ENCODE measurements at regions of chr19 and their contacts with region 1.

Region 1: GRCh38 chr19:1383311-1384084 is at the start of gene NDUFS7:
- DNase-seq: peak; percentile 85 to 95 (median 91)
- H3K4me3 ChIP-seq: peak within 1 kb of the TSS; percentile 79
- H3K4me3 Mint-ChIP-seq: peak within 1 kb of the TSS; percentile 92 to 99 (median 95)
- H3K27ac ChIP-seq: peak within 1 kb of the TSS; percentile 77
- H3K27ac Mint-ChIP-seq: peak within 1 kb of the TSS; percentile 72 to 100 (median 96)
- H3K4me1 ChIP-seq: peaks cover 7% of the 10 kb centered on the region
- H3K4me1 Mint-ChIP-seq: peaks cover 15 to 30% (median 15%) of the 10 kb centered on the region in 3 donors
- H3K27me3 ChIP-seq: no peaks in the 10 kb centered on the region
- H3K27me3 Mint-ChIP-seq: peaks cover 4 to 10% of the 10 kb centered on the region in 2 donors
- total RNA-seq, gene NDUFS7: 102 to 104 TPM

Region 2: GRCh38 chr19:1355568-1356507 is 27.7 kb before region 1 on chr19:
- CTCF ChIA-PET with region 1: no interaction called
- POLR2A ChIA-PET with region 1: interaction called, 10 read pairs
- DNase-seq: no peak
- H3K4me3 ChIP-seq: peak overlapping the region; percentile 50
- H3K4me3 Mint-ChIP-seq: peak overlapping the region; percentile 81 to 92 (median 87)
- H3K27ac ChIP-seq: no peak overlapping the region
- H3K27ac Mint-ChIP-seq: peak overlapping the region in 7 of 8 donors; percentile 44 to 97 (median 68)
- H3K4me1 ChIP-seq: peaks cover 10% of the 10 kb centered on the region
- H3K4me1 Mint-ChIP-seq: peaks cover 12 to 22% (median 15%) of the 10 kb centered on the region in 3 donors
- H3K27me3 ChIP-seq: no peaks in the 10 kb centered on the region
- H3K27me3 Mint-ChIP-seq: no peaks in the 10 kb centered on the region

Region 3: GRCh38 chr19:1366296-1366695 is 17.2 kb before region 1 on chr19:
- CTCF ChIA-PET with region 1: no interaction called
- POLR2A ChIA-PET with region 1: no interaction called
- DNase-seq: no peak
- H3K4me3 ChIP-seq: no peak overlapping the region
- H3K4me3 Mint-ChIP-seq: no peak overlapping the region
- H3K27ac ChIP-seq: no peak overlapping the region
- H3K27ac Mint-ChIP-seq: no peak overlapping the region
- H3K4me1 ChIP-seq: peaks cover 13% of the 10 kb centered on the region
- H3K4me1 Mint-ChIP-seq: peaks cover 19 to 30% (median 29%) of the 10 kb centered on the region in 3 donors
- H3K27me3 ChIP-seq: no peaks in the 10 kb centered on the region
- H3K27me3 Mint-ChIP-seq: peaks cover 0 to 2% of the 10 kb centered on the region in 2 donors

Region 4: DNA sequence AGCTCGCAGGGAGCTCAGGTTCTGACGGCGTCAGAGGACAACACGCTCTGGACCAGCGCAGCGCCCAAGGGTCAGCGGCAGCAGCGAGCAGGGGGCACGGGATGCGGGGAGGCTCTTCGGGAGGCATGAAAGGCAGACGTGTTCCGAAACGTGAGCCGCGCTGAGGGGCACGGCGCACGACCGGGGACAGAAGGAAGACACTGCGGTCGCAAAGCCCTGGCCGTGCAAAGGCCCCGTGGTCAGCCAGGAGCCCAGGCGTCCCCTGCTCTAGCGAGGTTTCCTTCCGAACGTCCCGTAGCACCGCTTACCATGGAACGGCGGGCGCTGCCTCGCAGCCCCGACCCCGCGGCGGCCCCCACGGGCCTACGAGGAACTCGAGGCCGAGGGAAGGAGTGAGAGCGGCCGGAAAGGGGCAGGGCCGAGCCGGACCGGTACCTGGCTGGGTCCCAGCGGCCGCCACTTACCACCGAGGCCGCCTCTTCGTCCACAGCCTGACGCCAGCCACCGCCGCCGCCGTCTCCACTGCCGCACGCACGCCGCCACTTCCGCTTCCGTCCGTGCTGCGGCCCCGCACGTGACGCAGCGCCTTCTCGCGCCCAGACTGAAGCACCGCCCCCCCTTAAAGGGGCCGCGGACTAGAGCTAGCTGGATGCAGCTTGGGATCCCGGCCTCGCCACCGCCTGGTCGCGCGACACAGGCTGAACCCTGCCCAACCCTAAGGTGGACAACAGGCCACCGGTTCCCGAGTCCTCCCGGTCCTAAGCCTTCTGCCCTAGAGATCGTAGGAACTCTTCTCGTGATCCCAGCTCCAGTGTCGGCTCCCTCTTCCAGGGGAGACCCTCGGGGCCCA is 492.4 kb after region 1 on chr19:
- CTCF ChIA-PET with region 1: no interaction called
- POLR2A ChIA-PET with region 1: no interaction called
- DNase-seq: peak; percentile 82 to 89 (median 86)
- H3K4me3 ChIP-seq: peak overlapping the region; percentile 93
- H3K4me3 Mint-ChIP-seq: peak overlapping the region; percentile 93 to 97 (median 96)
- H3K27ac ChIP-seq: peak overlapping the region; percentile 86
- H3K27ac Mint-ChIP-seq: peak overlapping the region; percentile 92 to 99 (median 98)
- H3K4me1 ChIP-seq: peaks cover 38% of the 10 kb centered on the region
- H3K4me1 Mint-ChIP-seq: peaks cover 22 to 49% (median 25%) of the 10 kb centered on the region in 3 donors
- H3K27me3 ChIP-seq: no peaks in the 10 kb centered on the region
- H3K27me3 Mint-ChIP-seq: peaks cover 0 to 5% of the 10 kb centered on the region in 2 donors

Measured in CD8-positive, alpha-beta memory T cell (primary cell).